ENCODE measurements at regions of chr2 and their contacts with region 1.

Region 1: GRCh38 chr2:172131713-172132555 is 29.2 kb upstream of the DLX2 start:
- DNase-seq: no peak
- H3K4me3 Mint-ChIP-seq: no peak overlapping the region
- H3K27ac Mint-ChIP-seq: no peak overlapping the region
- H3K4me1 Mint-ChIP-seq: no peaks in the 10 kb centered on the region
- H3K27me3 Mint-ChIP-seq: peaks cover 34% of the 10 kb centered on the region

Region 2: GRCh38 chr2:172113617-172114016 is 18.3 kb before region 1 on chr2:
- CTCF ChIA-PET with region 1: interaction called, 13 read pairs
- DNase-seq: no peak
- H3K4me3 Mint-ChIP-seq: no peak overlapping the region
- H3K27ac Mint-ChIP-seq: no peak overlapping the region
- H3K4me1 Mint-ChIP-seq: peaks cover 6% of the 10 kb centered on the region
- H3K27me3 Mint-ChIP-seq: peaks cover 46% of the 10 kb centered on the region